IMR-90 (cell line): ENCODE measurements at regions of chr5 and their contacts with region 1.

Region 1: DNA sequence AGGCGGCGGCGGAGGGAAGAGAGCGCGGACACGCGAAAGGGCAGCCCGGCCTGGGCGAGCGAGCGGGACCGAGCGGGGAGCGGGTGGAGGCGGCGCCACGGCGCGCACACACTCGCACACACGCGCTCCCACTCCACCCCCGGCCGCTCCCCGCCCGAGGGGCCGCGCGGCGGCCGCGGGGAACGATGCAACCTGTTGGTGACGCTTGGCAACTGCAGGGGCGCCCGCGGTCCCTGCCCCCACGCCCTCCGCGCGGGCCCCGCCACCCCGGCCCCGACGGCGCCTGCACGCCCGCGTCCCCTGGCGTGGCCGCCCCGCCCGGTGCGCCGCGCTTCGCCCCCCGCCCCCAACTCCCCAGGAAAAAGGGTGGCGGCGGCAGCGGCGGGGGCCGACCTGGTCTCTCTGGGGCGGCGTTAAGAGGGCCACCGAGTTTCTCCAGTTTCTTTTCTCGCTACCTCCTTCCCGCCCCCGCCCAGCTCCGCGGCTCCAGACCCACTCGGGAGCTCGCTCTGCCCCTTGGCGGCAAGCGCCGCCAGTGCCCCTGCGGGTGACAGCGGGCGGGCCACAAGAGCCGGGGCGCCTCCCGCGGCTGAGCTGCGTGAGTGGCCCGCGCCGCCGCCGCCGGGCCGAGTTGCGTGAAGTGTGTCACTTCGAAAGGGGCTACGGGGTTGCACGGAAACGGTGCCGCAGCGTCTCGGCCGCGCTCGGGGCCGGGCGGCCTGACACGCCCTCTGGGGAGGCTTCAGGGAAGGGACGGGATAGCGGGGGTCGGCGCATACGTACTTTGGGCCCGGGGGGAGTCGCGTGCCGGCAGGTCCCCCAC is at the start of gene NR3C1:
- DNase-seq: peak; percentile 86
- ATAC-seq: peak; percentile 82
- H3K4me3 ChIP-seq: peak within 1 kb of the TSS; percentile 97
- H3K27ac ChIP-seq: peak within 1 kb of the TSS; percentile 100
- H3K4me1 ChIP-seq: peaks cover 7% of the 10 kb centered on the region
- H3K27me3 ChIP-seq: no peaks in the 10 kb centered on the region
- CTCF ChIP-seq: peak; percentile 68
- POLR2A ChIP-seq: peak; percentile 55
- RAD21 ChIP-seq: peak; percentile 68
- total RNA-seq, gene NR3C1: 62.8 and 77.4 TPM in 2 replicates

Region 2: DNA sequence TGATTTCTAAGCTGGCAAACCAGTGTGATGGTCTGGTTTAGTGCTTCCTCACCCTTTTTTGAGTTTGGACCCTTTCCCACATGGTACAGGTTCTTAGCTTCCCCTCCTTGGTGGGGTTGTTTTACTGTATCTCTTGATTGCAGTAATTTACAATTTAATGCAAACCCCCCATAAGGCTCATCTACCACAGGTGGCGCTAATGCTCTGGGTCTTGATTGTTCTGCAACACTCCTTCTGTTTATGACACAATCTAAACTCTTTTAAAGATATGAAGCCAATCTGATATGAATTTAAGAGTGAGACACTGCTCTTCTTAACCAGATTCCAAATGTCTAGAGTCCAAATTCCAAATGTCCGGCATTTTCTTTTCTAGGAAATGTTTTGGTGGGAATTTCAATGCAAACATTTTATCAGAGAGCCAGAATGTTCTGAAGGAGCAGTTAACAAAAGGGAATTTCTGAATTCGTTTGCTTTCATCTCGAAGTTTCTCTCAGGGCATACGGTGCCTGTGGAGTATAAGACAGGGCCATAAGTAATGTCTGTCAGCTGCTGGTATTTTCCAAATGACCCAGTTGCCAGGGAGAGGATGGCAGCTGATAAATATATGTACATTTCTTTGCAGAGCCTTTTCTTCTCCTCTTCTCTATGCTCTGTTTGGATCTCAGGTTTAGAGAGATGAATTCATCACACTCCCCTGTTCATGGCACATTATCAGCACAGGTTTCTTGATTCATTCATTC is 386.9 kb before region 1 on chr5:
- CTCF ChIA-PET with region 1: no interaction called
- POLR2A ChIA-PET with region 1: no interaction called
- dilution Hi-C with region 1: no loop called
- in situ Hi-C with region 1: loop called (anchors 10 kb)
- intact Hi-C with region 1: loop called (anchors 5 kb)
- DNase-seq: peak; percentile 75
- ATAC-seq: peak; percentile 64
- H3K4me3 ChIP-seq: no peak overlapping the region
- H3K27ac ChIP-seq: no peak overlapping the region
- H3K4me1 ChIP-seq: peaks cover 6% of the 10 kb centered on the region
- H3K27me3 ChIP-seq: no peaks in the 10 kb centered on the region
- CTCF ChIP-seq: peak; percentile 75
- POLR2A ChIP-seq: no peak
- RAD21 ChIP-seq: peak; percentile 82

Region 3: GRCh38 chr5:143195491-143195890 is 208.3 kb before region 1 on chr5:
- CTCF ChIA-PET with region 1: no interaction called
- POLR2A ChIA-PET with region 1: no interaction called
- dilution Hi-C with region 1: no loop called
- in situ Hi-C with region 1: no loop called
- intact Hi-C with region 1: loop called (anchors 5 kb)
- DNase-seq: peak; percentile 37
- ATAC-seq: no peak
- H3K4me3 ChIP-seq: no peak overlapping the region
- H3K27ac ChIP-seq: no peak overlapping the region
- H3K4me1 ChIP-seq: peaks cover 2% of the 10 kb centered on the region; the same call in 1 of the 2 replicates
- H3K27me3 ChIP-seq: no peaks in the 10 kb centered on the region
- CTCF ChIP-seq: no peak
- POLR2A ChIP-seq: no peak
- RAD21 ChIP-seq: no peak

Region 4: GRCh38 chr5:143557061-143557818 is 153.4 kb after region 1 on chr5:
- CTCF ChIA-PET with region 1: no interaction called
- POLR2A ChIA-PET with region 1: interaction called, 3 read pairs
- dilution Hi-C with region 1: no loop called
- in situ Hi-C with region 1: no loop called
- intact Hi-C with region 1: loop called (anchors 2 kb)
- DNase-seq: peak; percentile 94
- ATAC-seq: peak; percentile 68
- H3K4me3 ChIP-seq: no peak overlapping the region
- H3K27ac ChIP-seq: peak overlapping the region; percentile 26
- H3K4me1 ChIP-seq: peaks cover 10% of the 10 kb centered on the region
- H3K27me3 ChIP-seq: no peaks in the 10 kb centered on the region
- CTCF ChIP-seq: no peak
- POLR2A ChIP-seq: no peak
- RAD21 ChIP-seq: no peak

Region 5: DNA sequence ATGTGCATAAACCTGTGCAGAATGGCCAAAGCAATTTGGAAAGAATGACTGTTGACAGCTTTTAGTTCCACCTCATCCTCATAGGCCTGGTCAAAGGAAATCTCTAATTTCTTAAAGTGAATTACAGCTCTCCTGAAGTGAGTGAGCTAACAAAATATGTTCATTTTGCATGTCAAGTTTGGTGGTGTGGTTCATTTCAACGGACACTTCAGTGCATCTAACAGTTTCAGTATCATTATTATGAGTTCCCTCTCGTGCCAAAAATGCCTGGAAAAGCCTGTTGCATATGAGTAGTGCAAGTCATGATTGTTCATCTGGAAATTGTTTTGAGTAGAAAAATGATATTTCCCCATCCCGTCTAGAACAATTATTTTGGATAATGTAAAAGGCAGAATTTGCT is 354.9 kb after region 1 on chr5:
- CTCF ChIA-PET with region 1: no interaction called
- POLR2A ChIA-PET with region 1: no interaction called
- dilution Hi-C with region 1: no loop called
- in situ Hi-C with region 1: no loop called
- intact Hi-C with region 1: loop called (anchors 5 kb)
- DNase-seq: peak; percentile 65
- ATAC-seq: peak; percentile 59
- H3K4me3 ChIP-seq: no peak overlapping the region
- H3K27ac ChIP-seq: peak overlapping the region; percentile 96; the same call in 1 of the 2 replicates
- H3K4me1 ChIP-seq: peaks cover 10% of the 10 kb centered on the region
- H3K27me3 ChIP-seq: no peaks in the 10 kb centered on the region
- CTCF ChIP-seq: no peak
- POLR2A ChIP-seq: no peak
- RAD21 ChIP-seq: no peak

Region 6: DNA sequence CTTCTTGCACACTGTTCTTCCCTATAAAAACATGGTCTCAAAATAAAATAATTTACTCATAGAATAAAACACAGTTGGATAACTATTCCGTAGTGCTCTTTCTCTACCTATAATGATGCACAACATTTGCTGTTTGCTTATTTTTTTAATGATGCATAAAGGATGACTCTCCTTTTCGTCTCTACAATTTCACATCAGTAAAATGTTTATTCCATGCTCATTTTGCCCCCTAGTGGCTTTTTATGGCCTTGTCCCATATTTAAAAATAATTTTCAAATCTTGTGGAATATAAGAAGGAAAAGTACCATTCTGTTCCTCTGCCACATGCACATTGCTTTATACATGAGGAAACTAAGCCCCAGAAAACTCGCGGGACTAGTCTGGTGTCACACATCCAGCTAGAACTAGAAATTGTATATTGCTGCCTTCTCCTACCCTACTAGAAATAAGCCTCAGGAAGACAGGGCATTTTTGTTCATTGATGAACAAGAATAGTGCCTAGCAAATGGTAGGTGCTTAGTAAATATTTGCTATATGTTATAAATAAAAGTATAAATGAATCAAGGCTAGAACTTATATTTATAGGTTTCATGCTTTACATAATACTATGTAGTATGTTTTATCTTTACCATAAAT is 779.6 kb after region 1 on chr5:
- CTCF ChIA-PET with region 1: no interaction called
- POLR2A ChIA-PET with region 1: no interaction called
- dilution Hi-C with region 1: no loop called
- in situ Hi-C with region 1: no loop called
- intact Hi-C with region 1: loop called (anchors 2 kb)
- DNase-seq: peak; percentile 85
- ATAC-seq: peak; percentile 66
- H3K4me3 ChIP-seq: no peak overlapping the region
- H3K27ac ChIP-seq: no peak overlapping the region
- H3K4me1 ChIP-seq: peaks cover 3% of the 10 kb centered on the region; the same call in 1 of the 2 replicates
- H3K27me3 ChIP-seq: no peaks in the 10 kb centered on the region
- CTCF ChIP-seq: peak; percentile 79
- POLR2A ChIP-seq: no peak
- RAD21 ChIP-seq: peak; percentile 74